ENCODE measurements at regions of chr10 and their contacts with region 1.

Region 1: GRCh38 chr10:87887548-87888289 is 24.3 kb downstream of the PTEN start:
- DNase-seq: no peak
- ATAC-seq: no peak
- H3K4me3 ChIP-seq: no peak overlapping the region
- H3K4me3 Mint-ChIP-seq: no peak overlapping the region
- H3K27ac ChIP-seq: no peak overlapping the region
- H3K27ac Mint-ChIP-seq: no peak overlapping the region
- H3K4me1 ChIP-seq: peaks cover 0 to 9% of the 10 kb centered on the region in 2 experiments
- H3K4me1 Mint-ChIP-seq: peaks cover 51 to 57% (median 53%) of the 10 kb centered on the region in 3 donors
- H3K27me3 ChIP-seq: no peaks in the 10 kb centered on the region
- H3K27me3 Mint-ChIP-seq: no peaks in the 10 kb centered on the region

Region 2: GRCh38 chr10:88616251-88616977 is 728.7 kb after region 1 on chr10:
- CTCF ChIA-PET with region 1: interaction called in 1 of 2 experiments, 10 read pairs
- POLR2A ChIA-PET with region 1: no interaction called
- DNase-seq: no peak
- ATAC-seq: no peak
- H3K4me3 ChIP-seq: no peak overlapping the region
- H3K4me3 Mint-ChIP-seq: no peak overlapping the region
- H3K27ac ChIP-seq: no peak overlapping the region
- H3K27ac Mint-ChIP-seq: no peak overlapping the region
- H3K4me1 ChIP-seq: no peaks in the 10 kb centered on the region
- H3K4me1 Mint-ChIP-seq: no peaks in the 10 kb centered on the region
- H3K27me3 ChIP-seq: no peaks in the 10 kb centered on the region
- H3K27me3 Mint-ChIP-seq: no peaks in the 10 kb centered on the region

Measured in T-cell (primary cell).